Natural killer cell (primary cell): ENCODE measurements at regions of chr6 and their contacts with region 1.

Region 1: DNA sequence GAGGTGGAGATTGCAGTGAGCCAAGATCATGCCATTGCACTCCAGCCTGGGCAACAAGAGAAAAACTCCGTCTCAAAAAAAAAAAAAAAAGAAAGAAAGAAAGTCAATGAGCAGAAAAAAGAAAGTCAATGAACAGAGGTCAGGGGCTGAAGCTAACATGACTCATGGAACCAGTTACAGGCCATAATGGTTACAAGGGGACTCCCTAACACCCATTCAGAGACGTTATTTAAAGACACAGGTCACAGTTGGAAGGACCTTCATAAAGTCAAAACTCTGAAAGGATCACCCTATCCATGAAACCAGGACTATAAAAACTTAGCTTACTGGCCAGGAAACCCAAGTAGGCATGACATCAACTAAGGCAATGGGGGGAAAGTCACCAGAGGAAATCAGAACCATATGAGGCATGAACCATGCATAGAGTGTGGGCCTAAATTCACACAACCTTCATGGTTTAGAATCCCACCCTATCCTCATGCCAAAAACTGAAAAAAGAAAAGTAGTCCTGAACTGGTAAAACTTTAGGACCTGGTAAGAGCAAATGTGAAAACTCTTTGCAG is 18.2 kb downstream of the FBXL4 start:
- DNase-seq: no peak
- ATAC-seq: no peak
- H3K4me3 ChIP-seq: no peak overlapping the region
- H3K4me3 Mint-ChIP-seq: no peak overlapping the region
- H3K27ac ChIP-seq: no peak overlapping the region
- H3K27ac Mint-ChIP-seq: no peak overlapping the region
- H3K4me1 ChIP-seq: no peaks in the 10 kb centered on the region
- H3K4me1 Mint-ChIP-seq: peaks cover 37 to 40% of the 10 kb centered on the region in 2 donors
- H3K27me3 ChIP-seq: no peaks in the 10 kb centered on the region
- H3K27me3 Mint-ChIP-seq: no peaks in the 10 kb centered on the region
- CTCF ChIP-seq: no peak

Region 2: DNA sequence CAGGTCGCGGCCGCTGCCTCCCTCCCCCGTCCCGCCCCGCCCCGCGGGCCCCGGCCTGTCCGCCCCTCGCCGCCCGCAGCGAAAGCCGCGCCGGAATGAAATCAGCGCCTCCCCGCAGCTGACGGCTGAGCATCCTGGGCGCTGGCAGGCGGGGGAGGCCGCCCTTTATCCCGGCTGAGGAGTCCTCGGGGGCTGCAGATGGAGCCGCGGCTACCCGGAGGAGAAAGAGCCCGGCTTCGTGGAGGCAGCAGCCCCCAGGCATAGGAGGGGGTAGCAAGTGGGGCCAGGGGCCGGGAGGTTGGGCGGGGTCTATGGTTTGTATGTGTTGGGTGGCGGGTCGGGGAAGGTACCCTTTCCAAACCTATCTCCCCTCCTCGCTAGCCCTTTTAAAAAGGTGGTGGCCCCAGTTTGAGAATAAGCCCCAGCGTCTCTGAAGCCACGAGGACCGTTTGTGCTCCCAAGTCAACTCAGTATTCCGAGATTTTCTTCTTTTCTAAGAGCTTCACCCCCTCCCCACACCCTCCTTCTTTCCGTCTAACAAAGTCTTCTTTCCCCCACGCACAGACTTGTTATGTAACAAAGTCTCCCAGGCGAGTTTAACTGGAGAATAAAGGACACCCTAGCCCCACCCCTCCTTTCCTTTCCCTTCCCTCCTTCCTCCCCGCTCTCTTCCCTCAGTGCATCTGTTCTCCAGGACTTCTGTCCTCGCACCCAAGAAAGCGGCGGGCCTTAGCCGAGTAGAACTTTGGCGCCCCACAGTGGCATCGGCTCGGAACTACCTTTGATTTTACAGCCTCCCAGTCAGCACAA is 84.2 kb before region 1 on chr6:
- intact Hi-C with region 1: loop called (anchors 10 kb)
- DNase-seq: peak; percentile 36 to 78
- ATAC-seq: peak; percentile 74 to 80 (median 79)
- H3K4me3 ChIP-seq: no peak overlapping the region
- H3K4me3 Mint-ChIP-seq: peak overlapping the region; percentile 74
- H3K27ac ChIP-seq: no peak overlapping the region
- H3K27ac Mint-ChIP-seq: no peak overlapping the region
- H3K4me1 ChIP-seq: peaks cover 29% of the 10 kb centered on the region
- H3K4me1 Mint-ChIP-seq: peaks cover 14 to 23% of the 10 kb centered on the region in 2 donors
- H3K27me3 ChIP-seq: peaks cover 82% of the 10 kb centered on the region
- H3K27me3 Mint-ChIP-seq: peaks cover 75 to 85% of the 10 kb centered on the region in 2 donors
- CTCF ChIP-seq: peak; percentile 71